ENCODE measurements at regions of chr11 and their contacts with region 1.

Region 1: DNA sequence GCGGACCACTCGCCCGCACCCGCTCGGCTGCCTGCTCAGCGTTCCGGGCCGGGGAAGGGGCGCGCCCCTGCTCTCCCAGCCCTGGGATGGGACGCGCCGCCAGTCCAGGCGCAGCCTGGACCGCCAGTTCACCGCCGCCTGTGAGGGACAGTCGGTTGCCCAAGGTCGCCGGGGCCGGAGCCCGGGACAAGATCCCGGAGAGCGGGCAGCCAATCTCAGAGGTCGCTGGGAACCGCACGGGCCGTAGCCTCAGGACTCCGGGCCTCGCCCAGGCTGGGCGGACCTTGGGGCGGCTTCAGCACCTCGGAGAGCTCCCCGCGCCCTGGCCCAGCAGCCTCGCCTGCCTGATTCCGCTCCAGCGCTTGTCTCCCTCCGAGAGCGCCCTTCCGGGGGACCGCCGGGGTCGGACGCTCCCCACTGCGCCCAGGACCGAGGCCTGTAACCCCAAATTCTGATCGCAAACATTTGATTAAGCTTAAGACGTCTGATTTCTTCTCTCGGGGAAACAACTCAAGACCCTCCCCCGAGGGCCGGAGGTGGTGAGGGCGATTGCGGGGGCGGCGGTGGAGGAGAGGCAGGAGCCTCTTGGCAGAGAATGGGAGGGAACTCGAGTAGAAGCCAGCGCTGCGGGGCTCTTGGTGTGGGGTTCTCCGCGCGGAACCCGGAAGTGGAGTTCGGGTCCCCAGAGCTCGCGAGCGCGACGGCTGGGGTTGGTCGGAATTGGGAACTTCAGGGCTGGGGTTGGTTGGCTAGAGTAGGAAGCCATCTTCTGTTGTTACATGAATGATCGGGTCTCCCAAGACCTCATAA is 1.1 kb upstream of the CHRM4 start:
- DNase-seq: peak; percentile 92
- ATAC-seq: peak; percentile 66
- H3K4me3 Mint-ChIP-seq: peak overlapping the region; percentile 84
- H3K27ac Mint-ChIP-seq: no peak overlapping the region
- H3K4me1 Mint-ChIP-seq: peaks cover 25% of the 10 kb centered on the region
- H3K27me3 Mint-ChIP-seq: peaks cover 49% of the 10 kb centered on the region
- CTCF ChIP-seq: no peak

Region 2: DNA sequence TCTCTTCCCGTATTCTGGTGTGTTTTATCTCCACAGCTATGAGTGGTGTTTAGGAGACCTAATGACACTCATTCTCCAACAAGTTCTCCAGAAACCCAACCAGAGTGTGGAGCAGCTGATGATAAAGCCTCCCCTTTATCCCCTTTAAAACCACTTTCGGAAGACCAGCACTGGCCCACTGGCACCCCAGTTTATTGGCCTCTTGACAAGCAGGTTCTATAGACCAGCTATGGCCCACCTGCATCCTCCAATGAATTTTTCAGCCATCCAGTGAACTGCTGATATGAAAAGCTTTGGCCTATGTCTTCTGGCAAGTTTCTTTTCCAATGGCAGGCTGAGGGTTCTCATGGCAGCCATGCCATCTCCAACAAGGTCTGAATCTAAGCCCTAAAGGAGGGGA is 754.6 kb before region 1 on chr11:
- CTCF ChIA-PET with region 1: no interaction called
- POLR2A ChIA-PET with region 1: no interaction called
- DNase-seq: no peak
- ATAC-seq: no peak
- H3K4me3 Mint-ChIP-seq: no peak overlapping the region
- H3K27ac Mint-ChIP-seq: no peak overlapping the region
- H3K4me1 Mint-ChIP-seq: no peaks in the 10 kb centered on the region
- H3K27me3 Mint-ChIP-seq: peaks cover 17% of the 10 kb centered on the region
- CTCF ChIP-seq: no peak

Region 3: DNA sequence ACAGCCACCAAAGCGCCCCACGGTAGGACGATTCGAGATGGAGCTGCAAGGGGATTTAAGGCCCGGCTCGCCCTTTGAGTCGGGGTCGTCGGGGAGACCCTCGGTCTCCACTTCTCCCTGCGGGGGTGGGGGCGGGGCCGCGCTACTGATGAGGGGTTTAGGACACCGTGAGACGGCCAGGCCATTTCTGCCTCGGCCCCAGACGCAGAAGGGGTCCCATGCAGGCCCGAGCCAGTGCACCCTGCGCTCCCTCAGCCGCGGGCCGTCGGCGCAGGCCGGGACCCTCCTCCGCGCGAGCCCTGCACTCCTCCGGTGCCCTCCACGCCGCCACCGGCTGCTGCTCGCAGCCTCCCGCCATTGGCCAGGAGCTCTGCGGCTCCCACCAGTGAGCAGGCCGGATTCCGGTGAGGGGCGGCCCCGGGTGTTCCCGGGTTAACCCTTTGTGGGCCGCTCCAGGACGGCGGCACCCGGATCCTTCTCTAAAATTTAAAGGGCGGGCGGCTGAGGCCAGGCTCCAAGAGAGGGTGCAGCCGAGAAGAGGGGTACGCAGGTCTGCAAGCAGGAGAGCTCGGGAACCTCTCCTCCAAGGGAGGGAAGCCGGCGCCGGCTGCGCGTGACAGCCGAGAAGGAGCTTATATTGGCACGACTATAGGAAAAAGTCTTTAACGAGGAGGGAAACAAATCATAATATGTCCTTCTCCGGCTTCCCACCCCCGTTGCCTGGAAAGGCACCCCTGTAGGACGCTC is 97.1 kb before region 1 on chr11:
- CTCF ChIA-PET with region 1: interaction called, 12 read pairs
- POLR2A ChIA-PET with region 1: interaction called, 4 read pairs
- DNase-seq: peak; percentile 90
- ATAC-seq: peak; percentile 68
- H3K4me3 Mint-ChIP-seq: peak overlapping the region; percentile 82
- H3K27ac Mint-ChIP-seq: peak overlapping the region; percentile 93
- H3K4me1 Mint-ChIP-seq: peaks cover 50% of the 10 kb centered on the region
- H3K27me3 Mint-ChIP-seq: no peaks in the 10 kb centered on the region
- CTCF ChIP-seq: no peak

Region 4: DNA sequence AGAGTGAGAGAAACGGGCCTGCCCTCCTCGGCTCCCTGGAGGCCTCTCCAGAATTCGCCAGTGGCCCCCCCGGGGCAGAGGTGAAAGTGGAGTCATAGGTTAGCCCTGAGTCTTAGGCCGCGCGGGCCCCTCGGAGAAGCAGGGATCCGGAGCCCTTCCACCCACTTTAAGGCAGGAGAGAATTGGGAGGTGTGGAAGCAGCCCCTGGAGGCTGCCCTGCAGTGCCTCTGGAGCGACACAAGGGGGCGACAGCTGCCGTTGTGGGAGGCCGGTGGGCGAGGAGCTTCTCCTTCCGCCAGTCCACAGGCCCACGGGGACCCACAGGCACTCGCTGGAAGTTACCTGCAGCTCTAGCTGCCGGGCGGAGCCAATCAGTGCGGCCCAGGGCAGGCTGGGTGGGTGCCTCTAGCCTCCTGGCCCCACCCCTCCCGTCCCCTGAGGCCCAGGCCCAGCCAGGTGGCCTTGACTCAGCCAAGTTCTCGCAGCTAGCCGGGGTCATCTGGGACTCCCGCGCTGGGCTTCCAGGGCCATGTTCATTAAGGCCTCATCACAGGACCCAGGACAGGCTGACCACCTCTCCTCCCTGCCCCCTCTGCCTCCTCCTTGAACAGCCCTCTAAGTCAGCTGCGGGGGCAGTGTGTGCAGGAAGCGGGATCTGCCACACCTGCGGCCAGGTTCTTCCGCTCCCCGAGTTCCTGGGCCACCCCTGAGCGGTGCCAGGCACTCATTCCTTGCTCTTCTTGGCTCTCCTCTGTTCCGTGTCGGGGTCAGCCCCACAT is 40.4 kb before region 1 on chr11:
- CTCF ChIA-PET with region 1: interaction called, 46 read pairs
- POLR2A ChIA-PET with region 1: no interaction called
- DNase-seq: peak; percentile 86
- ATAC-seq: peak; percentile 77
- H3K4me3 Mint-ChIP-seq: peak overlapping the region; percentile 30
- H3K27ac Mint-ChIP-seq: peak overlapping the region; percentile 89
- H3K4me1 Mint-ChIP-seq: peaks cover 64% of the 10 kb centered on the region
- H3K27me3 Mint-ChIP-seq: no peaks in the 10 kb centered on the region
- CTCF ChIP-seq: peak; percentile 98

Region 5: GRCh38 chr11:46404476-46405017 is 11.9 kb after region 1 on chr11:
- CTCF ChIA-PET with region 1: interaction called, 96 read pairs
- POLR2A ChIA-PET with region 1: interaction called, 3 read pairs
- DNase-seq: no peak
- ATAC-seq: no peak; the same call in 1 of the 2 replicates
- H3K4me3 Mint-ChIP-seq: no peak overlapping the region
- H3K27ac Mint-ChIP-seq: no peak overlapping the region
- H3K4me1 Mint-ChIP-seq: no peaks in the 10 kb centered on the region
- H3K27me3 Mint-ChIP-seq: no peaks in the 10 kb centered on the region
- CTCF ChIP-seq: no peak

Region 6: DNA sequence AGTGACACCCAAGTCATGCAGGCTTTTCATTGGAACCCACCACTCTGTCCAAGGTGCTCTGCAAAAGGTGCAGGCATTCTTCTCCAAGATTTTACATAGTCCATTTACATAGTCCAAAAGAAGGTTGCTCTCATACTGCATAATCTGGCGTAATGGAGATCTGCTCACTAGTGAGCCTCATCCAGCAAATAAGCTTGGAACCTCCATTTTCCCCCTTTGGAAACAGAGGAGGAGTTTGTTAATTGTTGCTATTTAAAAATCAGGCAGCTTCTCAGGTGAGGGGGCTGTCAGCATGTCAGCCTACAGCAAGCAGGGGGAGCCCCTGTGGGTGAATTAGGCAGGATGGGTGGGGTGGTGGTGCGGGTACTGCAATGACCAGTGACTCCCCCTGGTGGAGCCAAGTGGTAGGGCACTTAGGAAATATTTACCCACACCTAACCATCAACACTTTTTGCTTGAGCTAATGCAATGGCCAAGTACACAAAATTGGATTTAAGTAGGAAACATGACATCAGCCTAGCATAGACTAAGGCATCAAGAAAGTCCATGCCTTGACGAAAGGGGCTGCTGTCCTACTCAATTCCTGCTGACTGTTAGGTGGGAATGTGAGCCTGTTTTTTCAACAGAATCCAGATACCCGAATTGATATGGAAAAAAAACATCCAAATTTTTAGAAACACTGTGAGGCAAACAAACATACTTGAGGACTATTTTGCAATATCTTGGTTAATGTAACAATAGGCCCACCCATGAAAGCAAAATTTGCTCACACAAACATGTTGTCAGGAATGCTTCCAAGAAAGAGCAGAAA is 136.7 kb after region 1 on chr11:
- CTCF ChIA-PET with region 1: interaction called, 72 read pairs
- POLR2A ChIA-PET with region 1: no interaction called
- DNase-seq: peak; percentile 88
- ATAC-seq: peak; percentile 99
- H3K4me3 Mint-ChIP-seq: no peak overlapping the region
- H3K27ac Mint-ChIP-seq: no peak overlapping the region; the same call in 1 of the 2 replicates
- H3K4me1 Mint-ChIP-seq: peaks cover 16% of the 10 kb centered on the region
- H3K27me3 Mint-ChIP-seq: no peaks in the 10 kb centered on the region
- CTCF ChIP-seq: peak; percentile 94

Measured in WTC11 (cell line).